Esophagus muscularis mucosa (tissue), 4 donors: ENCODE measurements at regions of chr19 and their contacts with region 1.

Region 1: DNA sequence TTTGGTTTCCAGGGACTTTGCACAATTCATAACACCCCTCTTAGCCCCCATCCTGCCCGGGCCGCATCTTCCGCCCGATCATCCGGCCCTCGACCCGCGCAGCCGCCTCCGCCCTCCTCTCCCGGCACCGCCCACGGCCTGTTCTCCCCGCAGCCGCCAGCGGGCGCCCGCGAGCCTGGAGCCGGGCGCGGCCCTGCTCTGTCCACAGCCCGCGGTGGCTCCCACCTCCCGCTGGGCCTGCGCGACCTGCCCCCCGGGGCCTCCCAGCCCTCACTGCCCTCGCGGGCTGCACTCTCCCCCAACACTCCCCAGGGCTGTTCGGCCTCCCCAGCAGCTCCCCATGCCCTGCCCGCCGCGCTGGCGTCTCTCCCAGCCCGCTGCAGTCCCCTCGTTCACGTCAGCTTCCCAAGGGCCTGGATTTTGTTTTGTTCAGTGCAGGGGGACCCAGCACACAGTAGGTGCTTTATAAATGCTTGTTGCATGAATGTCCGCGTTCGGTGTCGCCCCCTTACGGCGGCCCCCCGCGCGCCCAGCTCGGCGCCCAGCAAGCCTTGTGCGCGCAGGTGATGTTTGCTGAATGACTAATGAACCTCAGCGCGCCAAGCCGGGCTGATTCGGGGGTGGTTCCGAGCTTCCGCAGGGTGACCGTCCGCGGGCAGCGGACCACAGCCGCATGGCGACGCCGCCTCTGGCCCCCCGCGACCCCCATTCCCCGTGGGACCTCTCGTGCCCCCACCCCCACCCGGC is 4.6 kb upstream of the APC2 start:
- DNase-seq: no peak
- H3K4me3 ChIP-seq: peak overlapping the region; percentile 45 to 56 (median 48)
- H3K27ac ChIP-seq: no peak overlapping the region
- H3K4me1 ChIP-seq: peaks cover 27 to 46% (median 41%) of the 10 kb centered on the region in 4 donors
- H3K27me3 ChIP-seq: peaks cover 13 to 53% (median 47%) of the 10 kb centered on the region in 4 donors
- CTCF ChIP-seq: peak; percentile 88 to 99 (median 89)
- EP300 ChIP-seq: no peak
- POLR2A ChIP-seq: no peak

Region 2: GRCh38 chr19:1513499-1514294 is 68.3 kb after region 1 on chr19:
- intact Hi-C with region 1: loop called (anchors 10 kb)
- DNase-seq: no peak
- H3K4me3 ChIP-seq: peak overlapping the region; percentile 59 to 71 (median 62)
- H3K27ac ChIP-seq: peak overlapping the region; percentile 73 to 83 (median 76)
- H3K4me1 ChIP-seq: peaks cover 10 to 36% (median 28%) of the 10 kb centered on the region in 4 donors
- H3K27me3 ChIP-seq: peaks cover 0 to 74% (median 12%) of the 10 kb centered on the region in 4 donors
- CTCF ChIP-seq: peak; percentile 54 to 69 (median 55)
- EP300 ChIP-seq: no peak
- POLR2A ChIP-seq: no peak

Region 3: DNA sequence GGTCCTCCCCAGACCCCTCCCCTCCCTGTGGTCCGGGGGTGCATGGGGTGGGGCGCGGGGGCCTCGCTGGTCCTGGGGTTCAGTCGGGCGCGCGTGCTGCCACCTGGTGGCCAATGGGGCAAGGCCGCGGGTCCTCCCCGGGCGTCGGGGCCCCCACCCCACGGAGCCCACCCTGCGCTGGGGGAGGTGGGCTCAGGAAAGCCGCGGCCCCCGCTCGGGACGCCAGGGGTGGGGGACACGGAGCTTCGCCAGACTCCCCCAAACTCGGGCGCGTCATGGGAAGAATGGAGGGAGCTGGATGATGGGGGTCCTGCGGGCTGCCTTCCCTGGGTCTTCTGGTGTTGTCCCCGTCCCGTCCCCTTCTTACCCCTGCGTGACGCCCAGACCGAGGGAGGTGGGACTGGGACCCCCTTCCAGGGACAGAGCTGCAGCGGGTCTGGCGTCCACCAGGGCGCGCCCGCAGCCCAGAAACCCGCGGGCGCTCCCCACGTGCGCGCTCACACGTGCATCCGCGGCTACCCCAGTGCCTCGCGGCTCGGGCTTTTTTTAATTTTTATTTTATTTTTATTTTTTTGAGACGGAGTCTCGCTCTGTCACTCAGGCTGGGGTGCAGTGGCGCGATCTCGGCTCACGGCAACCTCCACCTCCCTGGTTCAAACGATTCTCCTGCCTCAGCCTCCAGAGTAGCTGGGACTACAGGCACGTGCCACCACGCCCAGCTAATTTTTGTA is 226.8 kb after region 1 on chr19:
- intact Hi-C with region 1: no loop called
- DNase-seq: no peak
- H3K4me3 ChIP-seq: peak overlapping the region; percentile 0 to 38 (median 25)
- H3K27ac ChIP-seq: no peak overlapping the region
- H3K4me1 ChIP-seq: peaks cover 8 to 41% (median 31%) of the 10 kb centered on the region in 4 donors
- H3K27me3 ChIP-seq: peaks cover 7 to 100% (median 80%) of the 10 kb centered on the region in 4 donors
- CTCF ChIP-seq: peak; percentile 48 to 88 (median 83)
- EP300 ChIP-seq: no peak
- POLR2A ChIP-seq: no peak